PC-9 (cell line): ENCODE measurements at regions of chr16 and their contacts with region 1.

Region 1: DNA sequence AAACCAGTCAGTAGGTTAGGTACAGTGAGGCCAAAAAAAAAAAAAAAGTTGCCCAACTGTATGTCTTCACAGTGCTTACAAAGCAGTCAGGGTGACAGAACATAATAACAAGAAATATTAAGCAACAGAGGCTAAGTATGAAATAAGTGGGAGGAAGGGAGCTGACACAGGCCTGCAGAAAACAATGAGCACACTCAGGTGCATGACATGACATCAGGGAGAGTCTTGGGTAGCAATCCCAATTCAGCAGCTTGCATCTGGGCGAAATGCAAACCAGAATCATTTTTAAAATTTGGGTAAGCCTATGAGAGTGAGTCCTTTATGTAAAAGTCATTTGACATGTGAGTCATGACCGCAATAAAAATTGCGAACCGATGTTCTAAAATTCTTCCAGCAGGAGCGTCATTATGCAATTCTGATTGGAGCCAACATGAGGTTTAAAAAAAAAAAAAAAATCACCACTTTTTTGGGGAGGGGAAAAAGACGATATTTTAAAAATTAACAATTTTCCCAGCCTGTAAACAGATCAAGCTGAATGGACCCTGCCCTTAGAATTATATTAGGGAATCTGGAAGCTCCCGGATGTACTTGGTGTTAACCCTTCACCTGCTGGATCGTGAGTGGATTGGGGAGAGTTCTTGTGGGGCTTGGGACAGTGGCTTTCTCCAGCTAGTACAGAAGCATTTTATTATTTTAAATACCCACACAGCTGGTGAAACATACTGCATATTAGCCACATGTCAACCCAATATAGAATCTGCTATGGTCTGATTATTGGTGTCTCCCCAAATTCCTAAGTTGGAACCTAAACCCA is 127.9 kb downstream of the NPIPB5 start:
- DNase-seq: peak in 1 of 2 experiments; percentile 91
- H3K4me3 ChIP-seq: no peak overlapping the region
- H3K27ac ChIP-seq: no peak overlapping the region; the same call in 1 of the 2 replicates
- H3K4me1 ChIP-seq: peaks cover 18% of the 10 kb centered on the region
- H3K27me3 ChIP-seq: no peaks in the 10 kb centered on the region; the same call in 1 of the 2 replicates
- CTCF ChIP-seq: no peak

Region 2: GRCh38 chr16:21574381-21574780 is 1064.2 kb before region 1 on chr16:
- CTCF ChIA-PET with region 1: no interaction called
- POLR2A ChIA-PET with region 1: no interaction called
- intact Hi-C with region 1: loop called (anchors 5 kb)
- DNase-seq: no peak
- H3K4me3 ChIP-seq: no peak overlapping the region
- H3K27ac ChIP-seq: no peak overlapping the region
- H3K4me1 ChIP-seq: no peaks in the 10 kb centered on the region
- H3K27me3 ChIP-seq: no peaks in the 10 kb centered on the region
- CTCF ChIP-seq: no peak

Region 3: GRCh38 chr16:21989133-21989532 is 649.5 kb before region 1 on chr16:
- CTCF ChIA-PET with region 1: no interaction called
- POLR2A ChIA-PET with region 1: interaction called, 12 read pairs
- intact Hi-C with region 1: no loop called
- DNase-seq: no peak
- H3K4me3 ChIP-seq: no peak overlapping the region
- H3K27ac ChIP-seq: no peak overlapping the region
- H3K4me1 ChIP-seq: no peaks in the 10 kb centered on the region
- H3K27me3 ChIP-seq: no peaks in the 10 kb centered on the region
- CTCF ChIP-seq: no peak